Activated CD8-positive, alpha-beta memory T cell treated with anti-CD3 and anti-CD28 coated beads, Interleukin-2, amount 10 ng/mL, durations not matched to agents 7 days and 5 days (primary cell): ENCODE measurements at regions of chr17 and their contacts with region 1.

Region 1: DNA sequence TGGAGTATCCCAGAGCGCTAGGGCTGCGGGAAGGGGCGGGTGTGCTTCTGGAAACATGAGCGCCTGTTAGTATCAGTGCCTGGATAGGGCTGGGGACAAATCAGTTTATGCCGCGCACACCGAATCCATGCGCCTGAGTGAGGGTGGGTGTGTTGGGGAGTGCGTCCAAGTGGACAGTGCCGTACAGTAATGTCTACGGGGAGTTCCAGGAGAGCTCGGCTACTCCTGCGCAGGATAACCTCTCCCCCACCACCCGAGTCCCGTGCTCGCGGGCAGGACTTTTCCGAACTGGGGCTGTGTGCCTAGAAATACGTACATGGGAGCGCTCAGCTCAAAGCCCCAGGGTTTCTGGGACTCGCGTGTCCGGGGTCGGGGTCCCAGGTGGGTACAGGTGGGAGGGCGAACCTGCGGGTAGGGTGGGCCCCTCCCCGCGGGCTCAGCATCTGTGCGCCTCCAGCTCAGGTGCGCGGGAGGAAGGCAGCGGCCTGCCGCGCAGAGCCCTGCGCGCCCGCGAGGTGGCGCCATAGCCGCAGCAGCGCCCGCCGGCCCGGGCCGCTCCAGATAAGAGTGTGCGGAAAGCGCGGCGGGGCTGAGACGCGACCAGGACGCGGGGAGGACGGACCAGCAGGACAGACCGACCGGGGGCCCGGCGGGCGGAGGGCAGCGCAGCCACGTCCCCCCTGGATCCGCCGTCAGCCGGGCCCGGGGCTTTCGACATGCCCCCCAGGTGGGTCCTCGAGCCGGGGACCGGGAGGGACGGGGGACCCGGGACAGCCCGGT is at the start of gene HIC1:
- DNase-seq: peak; percentile 87
- ATAC-seq: peak; percentile 51
- H3K4me3 Mint-ChIP-seq: peak within 1 kb of the TSS; percentile 78
- H3K27ac Mint-ChIP-seq: peak within 1 kb of the TSS; percentile 86
- H3K4me1 Mint-ChIP-seq: peaks cover 26% of the 10 kb centered on the region
- H3K27me3 Mint-ChIP-seq: peaks cover 11% of the 10 kb centered on the region
- total RNA-seq, gene HIC1: 88.5 to 122 TPM

Region 2: GRCh38 chr17:2034806-2035540 is 19.7 kb before region 1 on chr17:
- CTCF ChIA-PET with region 1: no interaction called
- DNase-seq: no peak
- ATAC-seq: no peak
- H3K4me3 Mint-ChIP-seq: no peak overlapping the region
- H3K27ac Mint-ChIP-seq: no peak overlapping the region
- H3K4me1 Mint-ChIP-seq: peaks cover 10% of the 10 kb centered on the region
- H3K27me3 Mint-ChIP-seq: no peaks in the 10 kb centered on the region

Region 3: DNA sequence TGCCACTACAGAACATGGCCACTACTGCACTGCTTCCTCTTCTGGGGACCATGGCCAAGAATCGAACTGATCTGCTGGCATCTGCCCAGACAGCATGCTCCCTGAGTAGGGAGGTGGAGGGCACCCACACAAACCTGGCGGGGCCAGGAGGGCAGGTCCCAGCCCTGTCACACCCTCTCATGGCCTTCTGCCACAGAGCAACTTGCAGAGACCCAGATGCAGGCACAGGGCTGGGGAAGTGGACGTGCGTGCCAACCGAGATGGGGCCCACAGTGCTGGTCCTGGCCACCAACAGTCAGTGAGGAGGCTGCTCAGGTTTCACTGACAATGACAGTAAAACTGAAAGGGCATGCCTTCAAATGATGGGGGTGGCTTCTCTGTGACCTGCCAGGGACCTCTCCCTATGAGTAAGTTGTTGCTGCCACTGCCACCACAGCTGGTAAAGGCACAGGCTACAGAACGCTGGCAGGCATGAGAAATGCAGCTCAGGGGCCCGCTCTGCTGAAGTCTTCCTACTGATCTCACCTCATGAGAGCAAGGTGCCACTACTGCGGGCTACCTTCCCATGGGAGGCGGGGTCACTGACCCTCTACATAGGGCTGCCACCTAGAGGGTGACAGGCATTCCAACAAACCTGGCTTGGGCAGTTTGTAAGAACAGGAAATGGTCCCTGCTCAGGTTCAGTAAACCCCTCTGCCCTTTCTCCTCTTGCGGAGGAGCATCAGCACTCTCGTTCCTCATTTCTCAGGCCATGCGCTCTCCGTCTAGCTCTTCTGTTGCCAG is 15.7 kb after region 1 on chr17:
- CTCF ChIA-PET with region 1: interaction called, 88 read pairs
- DNase-seq: peak; percentile 96
- ATAC-seq: peak; percentile 82
- H3K4me3 Mint-ChIP-seq: peak overlapping the region; percentile 77
- H3K27ac Mint-ChIP-seq: peak overlapping the region; percentile 97
- H3K4me1 Mint-ChIP-seq: peaks cover 89% of the 10 kb centered on the region
- H3K27me3 Mint-ChIP-seq: no peaks in the 10 kb centered on the region

Region 4: DNA sequence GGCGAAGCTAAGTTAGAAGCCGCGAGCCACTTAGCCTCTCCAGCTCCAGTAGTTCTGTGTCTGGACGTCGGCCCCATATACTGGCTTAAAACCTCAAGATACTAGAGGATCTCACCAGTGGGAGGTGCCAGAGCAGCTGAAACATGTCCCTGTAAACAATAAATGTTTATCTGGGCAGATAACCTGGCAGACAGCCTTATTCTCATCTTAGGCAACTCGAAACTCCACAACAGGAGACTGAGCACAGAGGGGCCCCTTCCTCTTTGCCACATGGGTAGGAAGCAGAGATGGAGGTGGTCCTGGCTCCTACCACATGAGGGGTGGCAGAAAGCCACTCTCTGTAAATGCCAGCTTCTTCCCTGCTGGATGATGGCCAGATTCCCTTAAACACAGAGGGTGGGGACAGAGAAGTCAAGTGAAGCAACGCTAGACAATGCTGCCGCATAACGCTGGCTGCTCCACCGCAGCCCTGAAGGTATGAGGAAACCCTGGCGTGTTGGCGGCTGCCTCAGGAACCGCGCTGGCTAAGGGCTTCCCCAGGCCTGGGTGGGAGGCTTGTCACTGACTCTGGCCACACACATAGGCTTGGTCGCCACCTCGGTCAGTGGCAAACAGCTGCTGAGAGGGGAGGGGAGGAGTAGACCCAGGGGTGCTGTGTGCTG is 68.1 kb after region 1 on chr17:
- CTCF ChIA-PET with region 1: interaction called, 17 read pairs
- DNase-seq: no peak
- ATAC-seq: peak; percentile 35
- H3K4me3 Mint-ChIP-seq: no peak overlapping the region
- H3K27ac Mint-ChIP-seq: no peak overlapping the region
- H3K4me1 Mint-ChIP-seq: peaks cover 24% of the 10 kb centered on the region
- H3K27me3 Mint-ChIP-seq: no peaks in the 10 kb centered on the region

Region 5: DNA sequence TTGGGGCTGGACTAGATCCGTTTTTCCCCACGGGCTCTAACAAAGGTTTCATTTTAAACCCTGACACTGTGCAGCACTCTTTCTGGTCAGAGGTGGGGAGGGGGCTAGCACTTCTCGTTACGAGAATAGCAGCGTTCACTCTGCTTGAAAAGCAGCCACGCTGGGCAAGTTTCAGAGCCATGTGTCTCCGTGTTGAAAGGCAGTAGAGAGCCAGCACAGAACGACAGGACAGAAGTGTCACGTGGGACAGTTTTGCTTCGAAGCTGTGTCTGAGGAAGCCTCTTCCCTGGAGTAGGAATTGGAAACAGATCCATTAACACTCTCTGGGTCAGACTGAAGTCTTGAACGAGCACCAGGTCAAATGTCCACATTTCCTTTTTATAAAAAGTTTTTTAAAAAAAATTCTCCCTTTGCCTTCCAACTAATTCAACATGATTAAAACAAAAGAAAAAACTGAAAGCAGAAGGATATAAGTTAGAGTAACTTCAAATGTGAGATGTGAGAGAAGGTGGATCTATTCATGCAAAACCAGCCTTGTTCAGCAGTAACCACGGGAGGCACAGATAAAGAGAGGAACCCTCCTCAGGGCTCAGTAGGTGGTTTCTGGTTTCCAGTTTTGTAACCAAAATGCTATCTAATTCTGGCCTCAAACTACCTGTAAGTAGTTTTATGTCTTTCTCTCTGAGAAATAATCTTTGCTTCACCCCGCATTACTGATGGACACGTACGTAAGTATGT is 183.9 kb after region 1 on chr17:
- CTCF ChIA-PET with region 1: interaction called, 401 read pairs
- DNase-seq: no peak
- ATAC-seq: no peak
- H3K4me3 Mint-ChIP-seq: peak overlapping the region; percentile 46
- H3K27ac Mint-ChIP-seq: peak overlapping the region; percentile 87
- H3K4me1 Mint-ChIP-seq: peaks cover 77% of the 10 kb centered on the region
- H3K27me3 Mint-ChIP-seq: no peaks in the 10 kb centered on the region

Region 6: GRCh38 chr17:2275722-2276121 is 221.0 kb after region 1 on chr17:
- CTCF ChIA-PET with region 1: interaction called, 167 read pairs
- DNase-seq: peak; percentile 73
- ATAC-seq: peak; percentile 67
- H3K4me3 Mint-ChIP-seq: peak overlapping the region; percentile 34
- H3K27ac Mint-ChIP-seq: peak overlapping the region; percentile 82
- H3K4me1 Mint-ChIP-seq: peaks cover 67% of the 10 kb centered on the region
- H3K27me3 Mint-ChIP-seq: no peaks in the 10 kb centered on the region

Region 7: GRCh38 chr17:2354311-2354710 is 299.6 kb after region 1 on chr17:
- CTCF ChIA-PET with region 1: interaction called, 20 read pairs
- DNase-seq: no peak
- ATAC-seq: no peak
- H3K4me3 Mint-ChIP-seq: peak overlapping the region; percentile 14
- H3K27ac Mint-ChIP-seq: peak overlapping the region; percentile 85
- H3K4me1 Mint-ChIP-seq: peaks cover 15% of the 10 kb centered on the region
- H3K27me3 Mint-ChIP-seq: no peaks in the 10 kb centered on the region